PC-3 (cell line): ENCODE measurements at regions of chr12 and their contacts with region 1.

Region 1: GRCh38 chr12:124388679-124389536 is 94.0 kb downstream of the RFLNA start:
- DNase-seq: peak; percentile 79
- ATAC-seq: peak; percentile 28
- H3K4me3 ChIP-seq: peak overlapping the region; percentile 90
- H3K27ac ChIP-seq: peak overlapping the region; percentile 91
- H3K4me1 ChIP-seq: peaks cover 75% of the 10 kb centered on the region
- H3K27me3 ChIP-seq: no peaks in the 10 kb centered on the region
- CTCF ChIP-seq: no peak

Region 2: GRCh38 chr12:124422570-124423523 is 33.9 kb after region 1 on chr12:
- CTCF ChIA-PET with region 1: no interaction called
- POLR2A ChIA-PET with region 1: interaction called, 4 read pairs
- intact Hi-C with region 1: loop called (anchors 2 kb)
- DNase-seq: peak; percentile 91
- ATAC-seq: peak; percentile 84
- H3K4me3 ChIP-seq: peak overlapping the region; percentile 66
- H3K27ac ChIP-seq: peak overlapping the region; percentile 97
- H3K4me1 ChIP-seq: peaks cover 31% of the 10 kb centered on the region
- H3K27me3 ChIP-seq: no peaks in the 10 kb centered on the region
- CTCF ChIP-seq: no peak

Region 3: DNA sequence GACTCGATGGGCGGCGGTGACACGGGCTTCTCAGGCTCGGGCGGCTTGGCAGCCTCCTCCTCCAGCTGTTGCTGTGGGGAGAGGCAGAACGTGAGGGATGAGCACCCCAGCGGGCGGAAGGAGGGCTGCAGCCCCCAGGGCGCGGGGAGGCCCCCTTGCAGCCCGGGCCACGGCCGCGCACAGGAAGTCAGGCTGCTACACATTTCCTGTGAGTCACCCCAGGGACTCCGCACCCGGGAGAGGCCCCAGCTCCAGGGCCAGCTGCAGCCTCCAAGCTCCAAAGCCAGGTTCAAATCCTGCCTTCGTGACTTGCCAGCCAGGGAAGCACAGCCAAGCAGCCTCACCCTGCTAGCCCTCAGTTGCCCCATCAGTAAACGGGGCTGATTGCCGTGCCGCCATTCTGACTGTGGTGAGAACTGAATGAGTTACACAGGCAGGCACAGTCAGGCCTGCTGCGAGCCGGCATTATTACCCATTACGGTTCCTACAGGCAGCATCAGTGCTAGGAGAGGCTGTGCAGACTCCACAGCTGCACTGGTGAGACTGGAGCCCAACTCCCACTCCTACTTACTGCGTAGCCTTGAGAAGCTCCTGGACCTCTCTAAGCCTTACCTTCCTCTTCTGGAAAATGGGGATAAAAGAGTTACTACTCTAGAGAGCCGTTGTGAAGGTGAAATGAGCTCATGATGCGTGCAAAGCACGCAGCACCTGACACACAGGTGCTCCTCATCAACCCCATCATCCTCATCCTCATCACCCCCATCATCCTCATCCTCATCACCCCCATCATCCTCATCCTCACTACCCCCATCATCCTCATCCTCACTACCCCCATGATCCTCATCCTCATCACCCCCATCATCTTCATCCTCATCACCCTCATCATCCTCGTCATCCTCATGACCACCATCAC is 77.6 kb after region 1 on chr12:
- CTCF ChIA-PET with region 1: no interaction called
- POLR2A ChIA-PET with region 1: no interaction called
- intact Hi-C with region 1: no loop called
- DNase-seq: no peak
- ATAC-seq: peak; percentile 66
- H3K4me3 ChIP-seq: no peak overlapping the region
- H3K27ac ChIP-seq: no peak overlapping the region
- H3K4me1 ChIP-seq: no peaks in the 10 kb centered on the region; the same call in 1 of the 2 replicates
- H3K27me3 ChIP-seq: no peaks in the 10 kb centered on the region
- CTCF ChIP-seq: no peak

Region 4: GRCh38 chr12:124745891-124746570 is 357.1 kb after region 1 on chr12:
- CTCF ChIA-PET with region 1: no interaction called
- POLR2A ChIA-PET with region 1: no interaction called
- intact Hi-C with region 1: loop called (anchors 10 kb)
- DNase-seq: peak; percentile 94
- ATAC-seq: peak; percentile 81
- H3K4me3 ChIP-seq: peak overlapping the region; percentile 35; the same call in 1 of the 2 replicates
- H3K27ac ChIP-seq: peak overlapping the region; percentile 79
- H3K4me1 ChIP-seq: peaks cover 36% of the 10 kb centered on the region
- H3K27me3 ChIP-seq: no peaks in the 10 kb centered on the region
- CTCF ChIP-seq: no peak

Region 5: GRCh38 chr12:124767066-124767821 is 378.3 kb after region 1 on chr12:
- CTCF ChIA-PET with region 1: no interaction called
- POLR2A ChIA-PET with region 1: no interaction called
- intact Hi-C with region 1: loop called (anchors 5 kb)
- DNase-seq: peak; percentile 78
- ATAC-seq: peak; percentile 78
- H3K4me3 ChIP-seq: no peak overlapping the region
- H3K27ac ChIP-seq: no peak overlapping the region
- H3K4me1 ChIP-seq: peaks cover 16% of the 10 kb centered on the region
- H3K27me3 ChIP-seq: no peaks in the 10 kb centered on the region
- CTCF ChIP-seq: peak; percentile 99

Region 6: GRCh38 chr12:124917135-124917840 is 528.4 kb after region 1 on chr12:
- CTCF ChIA-PET with region 1: no interaction called
- POLR2A ChIA-PET with region 1: interaction called, 3 read pairs
- intact Hi-C with region 1: loop called (anchors 5 kb)
- DNase-seq: peak; percentile 100
- ATAC-seq: peak; percentile 72
- H3K4me3 ChIP-seq: peak overlapping the region; percentile 94
- H3K27ac ChIP-seq: peak overlapping the region; percentile 98
- H3K4me1 ChIP-seq: peaks cover 53% of the 10 kb centered on the region
- H3K27me3 ChIP-seq: no peaks in the 10 kb centered on the region
- CTCF ChIP-seq: no peak